Thyroid gland (tissue), 4 donors: ENCODE measurements at regions of chr11 and their contacts with region 1.

Region 1: DNA sequence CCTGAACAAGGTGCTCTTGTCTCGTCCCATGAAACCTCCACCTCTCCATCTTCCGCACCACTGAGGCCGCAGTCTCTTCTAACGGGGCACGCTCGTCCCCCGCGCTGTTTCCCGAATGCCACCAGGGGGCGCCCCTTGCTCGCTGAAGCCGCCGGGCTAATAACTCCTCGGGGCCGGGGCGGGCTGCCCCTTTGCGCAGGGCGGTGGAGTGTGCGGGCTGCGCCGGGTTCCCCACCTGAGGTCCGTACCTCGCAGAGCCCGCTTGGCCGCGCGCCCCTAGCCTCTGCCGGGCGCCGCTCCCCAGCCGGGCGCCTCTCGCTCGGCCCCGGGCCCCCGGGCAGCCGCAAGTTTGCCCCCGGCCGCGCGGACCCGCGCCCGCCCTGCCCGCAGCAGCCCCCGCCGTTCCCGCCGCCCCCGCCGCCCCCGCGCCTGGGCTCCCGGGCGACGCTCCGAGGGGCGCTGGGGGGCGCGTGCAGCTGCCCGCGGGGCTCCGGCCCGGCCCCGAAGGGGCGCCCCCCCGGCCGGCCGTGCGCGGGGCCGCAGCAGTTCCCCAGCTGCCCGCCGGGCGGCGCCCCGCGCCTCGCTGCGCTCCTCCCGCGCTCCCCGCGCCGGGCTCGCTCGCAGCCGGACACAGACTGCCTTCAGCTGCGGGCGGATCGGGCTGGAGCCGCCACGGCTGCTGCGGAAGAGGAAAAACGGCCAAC is at the start of gene GRIK4:
- DNase-seq: peak; percentile 83 to 85
- H3K4me3 ChIP-seq: peak within 1 kb of the TSS in 1 of 3 donors; percentile 20
- H3K27ac ChIP-seq: no peak within 1 kb of the TSS
- H3K4me1 ChIP-seq: peaks cover 0 to 5% of the 10 kb centered on the region in 2 donors
- H3K27me3 ChIP-seq: no peaks in the 10 kb centered on the region
- CTCF ChIP-seq: peak; percentile 82 to 98 (median 91)
- POLR2A ChIP-seq: no peak
- total RNA-seq, gene GRIK4: 0.54 to 3.7 (median 0.99) TPM

Region 2: DNA sequence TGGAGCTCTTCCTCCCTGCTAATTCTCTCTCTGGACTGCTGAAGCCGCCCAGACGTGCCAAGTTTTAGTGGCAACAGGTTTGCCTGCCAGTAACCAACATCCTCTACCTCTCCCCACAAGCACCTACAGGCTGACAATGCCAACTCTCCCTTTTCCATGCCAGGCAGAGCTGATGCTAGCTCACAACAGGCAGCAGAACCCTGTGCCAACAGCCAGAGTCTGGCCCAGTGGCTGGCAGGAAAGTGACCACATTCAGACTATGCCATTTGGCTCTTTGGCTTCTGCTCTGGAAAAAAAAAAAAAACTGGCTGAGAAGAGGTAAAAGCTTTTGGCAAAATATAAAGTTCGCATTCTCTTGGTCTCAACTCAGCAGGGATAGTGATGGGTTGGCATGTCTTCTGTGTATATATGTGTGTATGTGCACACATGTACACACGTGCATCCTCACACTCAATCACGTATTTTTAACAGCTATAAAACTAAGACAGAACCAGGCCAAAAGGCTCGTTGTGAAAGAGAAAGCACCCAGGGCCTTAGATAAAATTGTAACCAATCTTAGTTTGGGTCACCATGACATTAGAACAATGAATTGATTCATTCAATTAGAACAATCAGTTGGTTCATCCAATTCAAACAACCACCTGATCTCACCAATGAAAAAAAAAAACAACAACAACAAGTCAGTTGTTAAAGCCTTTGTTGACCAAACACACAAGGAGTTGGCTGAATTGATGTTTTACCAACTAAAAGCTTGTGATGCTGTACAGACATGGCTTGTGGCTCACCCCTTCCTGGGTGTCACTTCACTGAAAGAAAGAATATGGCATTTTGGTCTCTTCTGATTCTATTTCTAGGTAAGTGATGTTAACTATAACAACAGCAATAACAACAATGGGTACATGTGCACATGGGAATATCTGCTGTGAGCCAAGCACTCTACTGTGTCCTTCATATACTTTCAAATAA is 421.9 kb before region 1 on chr11:
- intact Hi-C with region 1: no loop called
- DNase-seq: no peak
- H3K4me3 ChIP-seq: no peak overlapping the region
- H3K27ac ChIP-seq: no peak overlapping the region
- H3K4me1 ChIP-seq: no peaks in the 10 kb centered on the region
- H3K27me3 ChIP-seq: no peaks in the 10 kb centered on the region
- CTCF ChIP-seq: no peak
- POLR2A ChIP-seq: no peak

Region 3: DNA sequence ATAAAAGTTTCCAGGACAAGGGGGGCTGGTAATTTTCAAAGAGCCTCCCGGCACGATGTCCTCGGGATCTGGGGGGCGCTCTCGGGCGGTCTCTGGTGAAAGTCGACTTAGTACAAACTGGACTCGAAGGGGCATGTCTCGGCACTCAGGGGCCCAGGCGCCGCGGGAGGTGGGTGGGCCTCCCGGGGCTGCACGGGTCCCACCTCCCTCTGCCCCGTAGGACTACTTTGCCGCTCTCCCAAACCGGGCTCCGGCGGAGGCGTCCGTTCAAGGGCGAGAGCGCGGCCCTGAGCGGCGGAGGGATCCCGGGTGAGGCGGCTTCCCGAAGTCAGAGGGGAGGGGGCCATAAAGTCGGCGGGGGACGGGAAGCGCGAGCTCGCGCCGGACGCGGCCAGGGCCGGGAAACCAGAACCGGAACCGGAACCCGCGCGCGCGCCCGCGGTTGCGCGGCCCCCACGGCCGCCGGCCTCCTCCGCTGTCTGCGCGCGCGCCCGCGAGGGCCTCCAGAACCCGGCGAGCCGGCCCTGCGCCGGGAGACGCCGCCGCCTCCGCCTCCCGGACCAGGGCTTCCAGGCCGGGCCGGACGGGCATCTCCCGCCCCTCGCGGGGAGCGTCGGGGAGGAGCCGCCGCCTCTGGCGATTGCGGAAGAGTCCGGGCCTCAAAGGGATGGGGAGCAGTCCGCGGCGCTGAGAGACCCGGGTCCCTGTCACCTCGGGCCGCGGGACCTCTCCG is 175.2 kb before region 1 on chr11 and contains the start of gene ARHGEF12:
- intact Hi-C with region 1: no loop called
- DNase-seq: peak; percentile 95 to 96
- H3K4me3 ChIP-seq: peak within 1 kb of the TSS; percentile 58 to 92 (median 65)
- H3K27ac ChIP-seq: peak within 1 kb of the TSS; percentile 90 to 99 (median 93)
- H3K4me1 ChIP-seq: peaks cover 28 to 35% of the 10 kb centered on the region in 2 donors
- H3K27me3 ChIP-seq: no peaks in the 10 kb centered on the region
- CTCF ChIP-seq: peak in 3 of 6 experiments; percentile 14 to 32 (median 18)
- POLR2A ChIP-seq: peak; percentile 75 to 93
- total RNA-seq, gene ARHGEF12: 169 to 268 (median 197) TPM

Region 4: DNA sequence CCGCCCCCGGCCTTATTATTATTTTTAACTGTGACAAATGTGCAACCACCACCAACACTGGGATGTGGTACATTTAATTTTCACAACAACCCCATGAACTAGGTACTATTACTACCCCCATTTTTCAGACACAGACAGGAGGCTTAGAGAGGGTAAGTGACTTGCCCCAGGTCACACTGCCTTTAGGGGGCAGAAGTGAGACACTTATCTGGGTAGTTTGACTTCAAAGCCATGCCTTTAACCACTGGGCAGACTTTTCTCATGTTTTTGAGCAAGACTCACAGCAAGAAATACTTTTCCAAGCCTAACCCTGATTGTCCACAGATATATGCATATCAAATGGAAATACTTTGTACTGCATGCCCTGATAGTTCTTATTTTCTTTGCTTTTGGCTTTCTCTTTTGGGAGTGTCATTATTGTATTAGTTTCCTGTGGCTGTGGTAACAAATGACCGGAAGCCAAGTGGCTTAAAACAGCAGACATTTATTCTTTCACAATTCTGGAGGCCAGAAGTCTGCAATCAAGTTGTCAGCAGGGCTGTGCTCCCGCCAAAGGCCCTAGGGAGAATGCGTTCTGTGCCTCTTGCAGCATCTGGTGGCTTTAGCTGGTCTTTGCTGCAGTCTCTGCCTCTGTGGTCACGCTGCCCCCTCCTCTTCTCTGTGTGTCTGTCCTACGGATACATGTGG is 111.1 kb after region 1 on chr11:
- intact Hi-C with region 1: loop called (anchors 10 kb)
- DNase-seq: peak; percentile 61 to 76
- H3K4me3 ChIP-seq: no peak overlapping the region
- H3K27ac ChIP-seq: peak overlapping the region; percentile 26 to 64 (median 61)
- H3K4me1 ChIP-seq: peaks cover 7 to 11% of the 10 kb centered on the region in 2 donors
- H3K27me3 ChIP-seq: no peaks in the 10 kb centered on the region
- CTCF ChIP-seq: peak in 3 of 6 experiments; percentile 24 to 51 (median 32)
- POLR2A ChIP-seq: peak in 1 of 2 donors; percentile 13

Region 5: DNA sequence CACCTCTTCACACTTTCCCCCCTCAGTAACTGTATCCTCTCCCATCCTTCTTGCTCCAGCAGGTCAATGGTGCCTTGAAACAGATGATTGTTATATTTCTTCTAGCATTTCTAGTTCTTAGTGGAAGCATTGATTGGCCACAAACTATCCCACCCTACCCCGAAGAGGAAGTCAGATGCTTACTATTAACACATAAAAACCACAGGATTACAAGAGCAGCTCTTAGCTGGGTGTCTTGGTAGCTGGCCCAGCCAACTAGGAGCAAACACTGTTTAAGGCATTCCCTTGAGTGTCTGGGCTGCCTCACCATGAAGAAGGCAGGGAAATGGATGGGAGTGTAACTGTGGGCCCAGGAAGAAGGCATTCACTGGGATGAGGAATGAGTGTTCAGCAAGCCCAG is 176.9 kb after region 1 on chr11:
- intact Hi-C with region 1: loop called (anchors 2 kb)
- DNase-seq: no peak
- H3K4me3 ChIP-seq: no peak overlapping the region
- H3K27ac ChIP-seq: no peak overlapping the region
- H3K4me1 ChIP-seq: no peaks in the 10 kb centered on the region
- H3K27me3 ChIP-seq: no peaks in the 10 kb centered on the region
- CTCF ChIP-seq: no peak
- POLR2A ChIP-seq: no peak

Region 6: DNA sequence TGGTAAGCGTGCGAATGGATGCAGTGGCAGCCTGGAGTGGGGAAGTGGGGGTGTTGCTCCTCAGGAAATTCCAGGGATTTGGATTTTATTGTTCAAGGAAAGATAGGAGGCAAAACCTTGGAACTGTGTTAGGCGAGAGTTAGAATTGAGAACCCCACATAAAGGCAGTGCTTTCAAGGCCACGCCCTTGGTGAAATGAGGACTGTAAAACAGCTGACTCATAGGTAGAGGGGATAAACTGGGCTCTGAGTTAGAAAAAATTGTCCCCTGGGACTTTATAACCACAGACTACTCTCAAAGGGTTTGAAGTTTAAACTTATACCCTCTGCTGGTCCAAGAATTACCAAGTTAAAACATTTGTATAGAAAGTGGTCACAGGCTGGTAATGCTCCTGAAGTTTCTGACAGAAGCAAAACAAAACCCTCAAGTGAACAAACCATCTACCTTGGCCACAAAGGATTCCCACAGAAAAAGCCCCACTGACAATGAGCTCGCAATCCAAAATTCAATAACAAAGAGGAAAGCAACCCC is 262.3 kb after region 1 on chr11:
- intact Hi-C with region 1: no loop called
- DNase-seq: no peak
- H3K4me3 ChIP-seq: no peak overlapping the region
- H3K27ac ChIP-seq: no peak overlapping the region
- H3K4me1 ChIP-seq: peaks cover 0 to 12% of the 10 kb centered on the region in 2 donors
- H3K27me3 ChIP-seq: no peaks in the 10 kb centered on the region
- CTCF ChIP-seq: no peak
- POLR2A ChIP-seq: no peak

Region 7: GRCh38 chr11:120807421-120808150 is 296.3 kb after region 1 on chr11:
- intact Hi-C with region 1: loop called (anchors 5 kb)
- DNase-seq: peak; percentile 34 to 51
- H3K4me3 ChIP-seq: no peak overlapping the region
- H3K27ac ChIP-seq: no peak overlapping the region
- H3K4me1 ChIP-seq: peaks cover 0 to 10% of the 10 kb centered on the region in 2 donors
- H3K27me3 ChIP-seq: no peaks in the 10 kb centered on the region
- CTCF ChIP-seq: no peak
- POLR2A ChIP-seq: no peak

Region 8: GRCh38 chr11:120952461-120953434 is 441.5 kb after region 1 on chr11:
- intact Hi-C with region 1: loop called (anchors 5 kb)
- DNase-seq: peak; percentile 77 to 85
- H3K4me3 ChIP-seq: no peak overlapping the region
- H3K27ac ChIP-seq: no peak overlapping the region
- H3K4me1 ChIP-seq: peaks cover 4% of the 10 kb centered on the region in 2 donors
- H3K27me3 ChIP-seq: no peaks in the 10 kb centered on the region
- CTCF ChIP-seq: peak; percentile 45 to 96 (median 70)
- POLR2A ChIP-seq: no peak